Activated CD4-positive, alpha-beta memory T cell treated with anti-CD3 and anti-CD28 coated beads for 36 hours (primary cell): ENCODE measurements at regions of chr2 and their contacts with region 1.

Region 1: GRCh38 chr2:169109502-169110409 is 40.4 kb downstream of the DHRS9 start:
- DNase-seq: peak; percentile 82
- H3K4me3 Mint-ChIP-seq: no peak overlapping the region
- H3K27ac Mint-ChIP-seq: no peak overlapping the region
- H3K4me1 Mint-ChIP-seq: peaks cover 44% of the 10 kb centered on the region
- H3K27me3 Mint-ChIP-seq: no peaks in the 10 kb centered on the region

Region 2: DNA sequence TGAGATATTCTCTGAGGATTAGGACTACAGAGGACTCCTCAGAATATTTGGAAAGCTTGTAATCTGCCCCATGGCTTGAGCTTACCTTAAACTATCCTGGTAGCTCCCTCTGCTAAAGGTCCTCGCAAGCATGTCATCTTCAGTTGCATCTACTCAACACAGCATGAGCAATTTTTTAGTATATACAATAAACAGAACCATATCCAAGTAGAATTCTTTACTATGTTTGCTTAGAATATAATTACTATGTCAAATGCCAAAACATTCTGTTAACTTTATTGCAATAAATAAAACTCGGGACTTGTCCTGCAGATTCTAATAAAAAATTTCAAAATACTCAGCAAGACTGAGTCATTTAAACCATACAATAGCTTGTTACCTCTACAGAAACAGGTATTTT is 141.4 kb before region 1 on chr2:
- CTCF ChIA-PET with region 1: interaction called, 14 read pairs
- POLR2A ChIA-PET with region 1: no interaction called
- intact Hi-C with region 1: no loop called
- DNase-seq: no peak
- H3K4me3 Mint-ChIP-seq: no peak overlapping the region
- H3K27ac Mint-ChIP-seq: no peak overlapping the region
- H3K4me1 Mint-ChIP-seq: peaks cover 27% of the 10 kb centered on the region
- H3K27me3 Mint-ChIP-seq: no peaks in the 10 kb centered on the region

Region 3: DNA sequence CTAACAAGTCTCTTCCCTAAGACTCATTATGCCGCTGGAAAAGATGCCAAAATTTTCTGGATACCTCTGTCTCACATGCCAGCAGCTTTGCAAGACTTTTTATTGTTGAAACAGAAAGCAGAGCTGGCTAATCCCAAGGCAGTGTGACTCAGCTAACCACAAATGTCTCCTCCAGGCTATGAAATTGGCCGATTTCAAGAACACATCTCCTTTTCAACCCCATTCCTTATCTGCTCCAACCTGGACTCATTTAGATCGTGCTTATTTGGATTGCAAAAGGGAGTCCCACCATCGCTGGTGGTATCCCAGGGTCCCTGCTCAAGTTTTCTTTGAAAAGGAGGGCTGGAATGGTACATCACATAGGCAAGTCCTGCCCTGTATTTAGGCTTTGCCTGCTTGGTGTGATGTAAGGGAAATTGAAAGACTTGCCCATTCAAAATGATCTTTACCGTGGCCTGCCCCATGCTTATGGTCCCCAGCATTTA is 14.1 kb before region 1 on chr2:
- CTCF ChIA-PET with region 1: interaction called, 18 read pairs
- POLR2A ChIA-PET with region 1: no interaction called
- intact Hi-C with region 1: no loop called
- DNase-seq: peak; percentile 31
- H3K4me3 Mint-ChIP-seq: no peak overlapping the region
- H3K27ac Mint-ChIP-seq: no peak overlapping the region
- H3K4me1 Mint-ChIP-seq: peaks cover 18% of the 10 kb centered on the region
- H3K27me3 Mint-ChIP-seq: no peaks in the 10 kb centered on the region

Region 4: GRCh38 chr2:169141713-169142352 is 32.1 kb after region 1 on chr2:
- CTCF ChIA-PET with region 1: interaction called, 161 read pairs
- POLR2A ChIA-PET with region 1: no interaction called
- intact Hi-C with region 1: loop called (anchors 1 kb)
- DNase-seq: peak; percentile 70
- H3K4me3 Mint-ChIP-seq: no peak overlapping the region
- H3K27ac Mint-ChIP-seq: no peak overlapping the region
- H3K4me1 Mint-ChIP-seq: no peaks in the 10 kb centered on the region
- H3K27me3 Mint-ChIP-seq: no peaks in the 10 kb centered on the region